Gastrocnemius medialis (tissue), 4 donors: ENCODE measurements at regions of chr10 and their contacts with region 1.

Region 1: DNA sequence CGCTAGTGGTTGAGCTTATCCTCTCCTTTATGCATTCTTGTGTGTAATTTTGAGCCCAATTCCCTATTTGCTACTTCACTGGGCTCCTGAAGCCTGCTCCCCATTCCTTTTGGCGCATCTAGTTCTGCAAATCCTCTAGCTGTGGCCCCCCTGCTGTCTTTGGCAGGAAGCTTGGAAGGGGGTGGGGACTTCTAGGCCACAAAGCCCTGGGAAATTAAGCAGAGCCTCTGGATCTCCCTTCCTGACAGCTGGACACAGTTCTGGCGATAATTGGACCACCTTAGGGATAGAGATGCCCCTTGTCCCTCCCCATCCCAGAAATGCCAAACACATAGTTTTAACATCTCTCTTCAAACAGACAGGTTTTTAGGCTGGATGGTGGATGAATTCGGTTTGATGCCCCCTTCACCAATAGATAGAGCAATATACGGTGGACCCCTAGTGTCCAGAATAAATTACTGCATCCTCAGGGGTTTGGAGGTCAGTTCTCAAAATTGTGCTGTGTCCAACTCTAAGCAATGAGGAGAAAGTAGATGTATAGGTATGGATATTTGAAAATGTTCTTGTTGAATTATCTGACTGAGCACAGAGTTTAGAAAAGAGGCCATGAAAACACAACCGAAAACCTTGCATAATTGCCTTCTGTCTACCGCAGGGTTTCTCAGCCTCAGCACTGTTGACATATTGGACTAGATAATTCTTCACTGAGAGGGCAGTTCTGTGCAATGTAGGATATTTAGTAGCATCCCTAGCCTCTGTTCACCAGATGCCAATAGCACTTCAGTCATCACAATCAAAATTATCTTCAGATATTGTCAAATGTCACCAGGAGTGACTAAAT is 75.5 kb downstream of the PAPSS2 start:
- DNase-seq: no peak
- ATAC-seq: peak; percentile 42 to 65
- H3K4me3 ChIP-seq: no peak overlapping the region
- H3K27ac ChIP-seq: no peak overlapping the region
- H3K4me1 ChIP-seq: no peaks in the 10 kb centered on the region
- H3K27me3 ChIP-seq: no peaks in the 10 kb centered on the region
- CTCF ChIP-seq: peak; percentile 30 to 67 (median 56)
- POLR2A ChIP-seq: no peak

Region 2: GRCh38 chr10:87531908-87532622 is 203.1 kb before region 1 on chr10:
- in situ Hi-C with region 1: no loop called
- intact Hi-C with region 1: loop called (anchors 10 kb)
- DNase-seq: no peak
- ATAC-seq: peak; percentile 46 to 75
- H3K4me3 ChIP-seq: peak overlapping the region in 1 of 4 donors; percentile 20
- H3K27ac ChIP-seq: peak overlapping the region; percentile 56 to 75 (median 64)
- H3K4me1 ChIP-seq: peaks cover 0 to 7% of the 10 kb centered on the region in 2 donors
- H3K27me3 ChIP-seq: no peaks in the 10 kb centered on the region
- CTCF ChIP-seq: no peak
- POLR2A ChIP-seq: no peak

Region 3: GRCh38 chr10:87659571-87660483 is 75.4 kb before region 1 on chr10 and contains the start of gene PAPSS2:
- in situ Hi-C with region 1: loop called in 2 of 4 experiments (anchors 5 kb)
- intact Hi-C with region 1: loop called (anchors 1 kb)
- DNase-seq: peak; percentile 21 to 30
- ATAC-seq: peak; percentile 34 to 59
- H3K4me3 ChIP-seq: peak within 1 kb of the TSS; percentile 61 to 84 (median 70)
- H3K27ac ChIP-seq: peak within 1 kb of the TSS; percentile 62 to 77 (median 68)
- H3K4me1 ChIP-seq: peaks cover 0 to 7% of the 10 kb centered on the region in 2 donors
- H3K27me3 ChIP-seq: peaks cover 8 to 19% (median 10%) of the 10 kb centered on the region in 3 donors
- CTCF ChIP-seq: no peak
- POLR2A ChIP-seq: peak; percentile 35 to 60
- total RNA-seq, gene PAPSS2: 2.7 to 8.7 (median 6.8) TPM